Esophagus muscularis mucosa (tissue), 4 donors: ENCODE measurements at regions of chr10 and their contacts with region 1.

Region 1: DNA sequence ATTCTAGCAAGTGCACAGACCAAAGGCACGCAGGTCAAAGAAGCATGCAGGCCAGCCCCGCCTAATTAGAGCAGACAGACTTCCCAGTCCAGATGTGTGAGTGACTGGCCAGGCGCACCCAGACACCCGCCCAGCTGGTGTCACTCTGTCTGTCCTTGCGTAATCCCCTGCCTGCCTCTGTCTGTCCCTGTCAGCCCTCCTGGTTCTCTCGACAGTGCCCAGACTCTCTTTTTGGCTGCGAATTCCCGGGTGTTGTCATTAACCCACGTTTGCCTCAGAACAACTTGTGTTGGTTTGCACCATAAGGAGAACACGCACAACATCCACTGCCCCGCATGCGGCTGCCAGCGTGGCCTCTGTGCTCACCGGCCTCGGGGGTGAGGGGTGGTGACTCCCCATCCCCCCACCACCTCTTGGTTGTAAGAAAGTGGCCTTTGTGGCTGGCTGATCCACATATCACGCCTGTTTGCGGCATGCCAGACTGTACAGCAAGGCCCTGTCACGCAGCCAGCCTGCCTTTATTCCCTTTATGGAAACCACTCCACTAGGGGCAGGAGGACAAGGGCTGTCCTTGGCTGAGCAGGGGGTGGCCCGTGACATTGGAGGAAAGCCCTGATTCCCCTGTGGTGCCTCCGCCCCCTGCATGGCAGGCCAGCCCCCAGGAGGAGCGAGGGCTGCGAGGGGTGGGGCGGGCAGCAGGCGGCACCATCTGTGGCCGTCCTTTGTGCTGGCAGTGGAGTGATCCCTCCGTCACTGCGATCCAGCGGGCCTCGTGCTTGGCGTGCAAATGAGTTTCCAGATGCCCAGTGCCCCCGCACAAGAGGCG is 72.8 kb upstream of the PPIF start:
- DNase-seq: peak; percentile 96
- H3K4me3 ChIP-seq: peak overlapping the region; percentile 1 to 18 (median 8)
- H3K27ac ChIP-seq: peak overlapping the region; percentile 78 to 90 (median 82)
- H3K4me1 ChIP-seq: peaks cover 59 to 70% (median 68%) of the 10 kb centered on the region in 4 donors
- H3K27me3 ChIP-seq: no peaks in the 10 kb centered on the region
- CTCF ChIP-seq: peak in 1 of 3 experiments; percentile 23
- EP300 ChIP-seq: peak; percentile 71
- POLR2A ChIP-seq: no peak

Region 2: DNA sequence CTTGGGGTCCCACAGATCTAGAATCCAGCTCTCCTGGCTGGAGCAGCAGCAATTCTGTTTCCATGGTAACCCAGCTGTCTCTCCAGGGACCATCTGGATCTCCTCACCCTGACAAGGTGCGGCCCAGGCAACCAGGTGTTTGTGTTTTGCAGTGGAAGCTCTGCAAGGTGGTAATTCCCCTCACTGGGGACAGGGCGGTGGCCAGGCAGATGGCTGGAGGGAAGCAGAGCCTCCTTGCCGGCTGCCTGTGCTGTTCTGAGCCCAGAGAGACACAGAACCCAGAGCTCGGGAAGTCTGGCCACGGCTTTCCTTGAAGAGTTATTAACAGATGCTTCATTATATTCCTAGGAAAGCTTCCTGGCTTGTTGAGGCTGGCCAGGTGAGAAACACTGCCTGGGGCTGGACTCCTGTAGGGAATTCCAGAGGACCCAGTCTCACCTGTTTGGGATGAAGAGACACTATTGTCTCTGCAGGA is 45.4 kb before region 1 on chr10:
- intact Hi-C with region 1: loop called (anchors 5 kb)
- DNase-seq: no peak
- H3K4me3 ChIP-seq: no peak overlapping the region
- H3K27ac ChIP-seq: no peak overlapping the region
- H3K4me1 ChIP-seq: peaks cover 24 to 64% (median 44%) of the 10 kb centered on the region in 4 donors
- H3K27me3 ChIP-seq: no peaks in the 10 kb centered on the region
- CTCF ChIP-seq: no peak
- EP300 ChIP-seq: no peak
- POLR2A ChIP-seq: no peak

Region 3: GRCh38 chr10:79559726-79560125 is 285.2 kb after region 1 on chr10:
- intact Hi-C with region 1: no loop called
- DNase-seq: no peak
- H3K4me3 ChIP-seq: no peak overlapping the region
- H3K27ac ChIP-seq: no peak overlapping the region
- H3K4me1 ChIP-seq: peaks cover 0 to 8% (median 5%) of the 10 kb centered on the region in 4 donors
- H3K27me3 ChIP-seq: peaks cover 0 to 8% (median 0%) of the 10 kb centered on the region in 4 donors
- CTCF ChIP-seq: no peak
- EP300 ChIP-seq: no peak
- POLR2A ChIP-seq: no peak